Ovary (tissue), 10 donors: ENCODE measurements at regions of chr15 and their contacts with region 1.

Region 1: DNA sequence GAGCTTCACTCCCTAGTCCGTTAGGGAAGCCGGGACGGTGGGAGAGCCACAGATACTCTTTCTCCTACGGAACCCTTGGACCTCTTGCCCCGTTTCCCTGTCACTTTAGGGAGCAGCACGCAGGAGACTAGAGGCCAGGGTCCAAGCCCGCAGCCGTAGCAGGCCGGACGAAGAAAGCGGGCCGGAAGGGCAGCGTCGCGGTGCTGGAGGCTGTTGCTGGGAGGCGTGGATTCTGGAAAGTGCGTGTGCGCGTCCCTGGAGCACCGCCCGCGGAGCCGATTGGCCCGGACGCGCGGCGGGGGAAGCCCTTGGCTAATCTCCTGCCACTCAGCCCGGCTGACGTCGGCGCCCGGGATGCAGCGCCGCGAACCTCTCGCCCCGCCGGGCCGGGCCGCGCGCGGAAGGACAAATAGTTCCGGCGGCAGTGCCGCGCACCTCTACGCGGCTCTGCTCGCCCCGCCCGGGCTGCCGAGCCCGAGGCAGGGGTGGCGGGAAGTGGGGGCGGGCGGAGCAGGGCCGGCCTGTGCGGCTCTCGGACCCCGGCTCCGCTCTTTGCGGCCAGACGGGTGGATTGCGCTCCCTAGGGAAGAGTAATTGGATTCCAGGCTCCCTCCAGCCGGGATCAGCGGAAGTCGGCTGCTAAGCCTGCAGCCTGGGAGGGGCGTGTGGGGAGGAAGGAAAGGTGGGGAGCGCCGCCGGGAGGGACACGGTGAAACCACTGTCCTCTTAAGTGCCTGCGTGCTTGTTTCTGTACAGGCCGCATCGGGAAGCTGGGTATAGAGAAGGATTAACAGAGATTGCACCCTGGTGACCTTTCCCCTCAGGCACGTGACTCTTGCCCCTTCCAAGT is 31.3 kb upstream of the TCF12 start:
- DNase-seq: peak; percentile 95 to 97 (median 96)
- H3K4me3 ChIP-seq: peak overlapping the region; percentile 47
- H3K27ac ChIP-seq: peak overlapping the region; percentile 93 to 96
- H3K4me1 ChIP-seq: peaks cover 2% of the 10 kb centered on the region
- H3K27me3 ChIP-seq: no peaks in the 10 kb centered on the region
- CTCF ChIP-seq: peak in 1 of 3 donors; percentile 16
- EP300 ChIP-seq: no peak
- POLR2A ChIP-seq: peak; percentile 87

Region 2: GRCh38 chr15:56168394-56168793 is 718.8 kb before region 1 on chr15:
- intact Hi-C with region 1: no loop called
- DNase-seq: no peak
- H3K4me3 ChIP-seq: no peak overlapping the region
- H3K27ac ChIP-seq: no peak overlapping the region
- H3K4me1 ChIP-seq: peaks cover 2% of the 10 kb centered on the region
- H3K27me3 ChIP-seq: no peaks in the 10 kb centered on the region
- CTCF ChIP-seq: no peak
- EP300 ChIP-seq: no peak
- POLR2A ChIP-seq: no peak

Region 3: GRCh38 chr15:56732921-56733797 is 154.0 kb before region 1 on chr15 and contains the start of gene ZNF280D:
- intact Hi-C with region 1: loop called in 1 of 4 experiments (anchors 5 kb)
- DNase-seq: peak; percentile 89 to 91 (median 90)
- H3K4me3 ChIP-seq: peak within 1 kb of the TSS; percentile 86
- H3K27ac ChIP-seq: peak within 1 kb of the TSS; percentile 98 to 99
- H3K4me1 ChIP-seq: peaks cover 11% of the 10 kb centered on the region
- H3K27me3 ChIP-seq: no peaks in the 10 kb centered on the region
- CTCF ChIP-seq: no peak
- EP300 ChIP-seq: no peak
- POLR2A ChIP-seq: peak; percentile 27
- total RNA-seq, gene ZNF280D: 36.8 to 66.0 (median 58.4) TPM

Region 4: GRCh38 chr15:56821721-56822425 is 65.3 kb before region 1 on chr15:
- intact Hi-C with region 1: no loop called
- DNase-seq: peak; percentile 16 to 50 (median 40)
- H3K4me3 ChIP-seq: no peak overlapping the region
- H3K27ac ChIP-seq: no peak overlapping the region
- H3K4me1 ChIP-seq: no peaks in the 10 kb centered on the region
- H3K27me3 ChIP-seq: no peaks in the 10 kb centered on the region
- CTCF ChIP-seq: no peak
- EP300 ChIP-seq: no peak
- POLR2A ChIP-seq: no peak